ENCODE measurements at regions of chr20 and their contacts with region 1.

Region 1: DNA sequence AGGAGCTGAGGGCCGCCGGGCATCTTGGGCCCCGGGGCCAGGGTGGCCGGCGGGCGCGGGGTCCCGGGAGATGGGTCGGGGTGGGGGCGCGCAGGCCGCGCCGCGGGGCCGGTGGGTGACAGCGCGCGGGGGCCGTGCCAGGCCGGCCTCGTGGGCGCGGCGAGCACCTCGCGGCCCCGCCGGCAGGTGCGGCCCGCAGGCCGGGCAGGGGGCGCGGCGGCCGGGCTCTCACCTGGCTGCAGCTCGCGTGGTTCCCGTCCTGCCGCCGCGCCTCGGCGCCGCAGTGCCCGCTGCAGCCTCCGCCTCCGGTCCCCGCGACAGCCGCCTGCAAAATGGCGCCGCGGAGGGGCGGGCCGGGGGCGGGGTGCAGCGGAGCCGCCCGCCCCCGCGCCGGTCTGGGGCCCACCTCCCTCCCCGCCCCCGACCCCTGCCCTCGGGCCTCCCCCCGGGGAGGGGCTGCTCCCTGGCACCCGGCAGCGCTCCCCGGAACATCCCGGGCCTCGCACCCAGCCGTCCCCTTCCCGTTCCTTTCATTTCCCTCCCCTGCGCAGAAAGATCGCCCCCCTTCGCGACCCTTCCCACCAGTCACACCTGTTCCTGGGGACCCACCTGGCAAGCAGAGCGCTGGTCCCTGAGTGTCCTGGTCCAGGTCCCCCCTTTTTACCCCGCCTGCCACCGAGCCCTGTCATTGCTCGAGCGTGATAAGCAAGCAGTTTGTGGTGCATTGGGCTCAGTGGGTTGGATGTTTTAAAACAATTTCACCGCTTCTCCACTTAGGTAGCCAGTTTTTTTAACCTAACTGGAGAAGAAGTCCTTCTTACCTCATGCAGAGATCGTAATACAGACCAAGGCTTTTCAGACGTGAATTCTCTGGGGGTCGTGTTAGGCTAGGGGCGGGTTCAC is at the start of gene SLC23A2:
- DNase-seq: peak; percentile 64
- ATAC-seq: peak; percentile 81
- H3K4me3 Mint-ChIP-seq: peak within 1 kb of the TSS; percentile 98
- H3K27ac Mint-ChIP-seq: peak within 1 kb of the TSS; percentile 92
- H3K4me1 Mint-ChIP-seq: peaks cover 43% of the 10 kb centered on the region
- H3K27me3 Mint-ChIP-seq: no peaks in the 10 kb centered on the region
- CTCF ChIP-seq: no peak
- total RNA-seq, gene SLC23A2: 70.9 and 79.8 TPM in 2 replicates

Region 2: DNA sequence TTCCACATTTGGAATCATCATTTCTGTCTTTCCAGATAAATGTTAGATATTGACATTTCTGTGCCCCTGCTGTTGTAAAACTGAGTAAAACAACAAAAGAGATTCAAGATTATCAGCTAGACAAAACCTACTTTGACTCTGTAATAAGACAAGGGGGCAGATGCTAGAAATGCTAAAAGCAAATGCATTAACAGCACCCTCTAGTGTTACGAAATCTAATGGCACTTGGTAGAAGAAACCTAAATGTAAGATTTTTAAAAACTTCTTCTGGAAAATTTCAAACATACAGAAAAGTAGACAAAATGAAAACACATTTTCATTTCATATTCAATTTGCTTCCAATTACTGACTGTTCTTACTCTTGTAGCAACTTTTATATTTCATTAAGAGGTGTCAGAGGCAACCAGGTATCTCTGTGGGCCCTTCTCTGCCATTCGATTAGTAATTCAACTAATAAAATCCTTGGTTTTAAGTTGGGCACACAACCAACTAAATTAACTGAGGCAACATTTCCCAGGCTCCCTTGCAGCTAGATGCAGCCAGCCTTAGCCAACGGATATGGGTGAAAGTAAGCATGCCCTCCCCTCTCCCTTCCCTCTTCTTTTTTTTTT is 45.1 kb before region 1 on chr20:
- CTCF ChIA-PET with region 1: interaction called, 5 read pairs
- POLR2A ChIA-PET with region 1: interaction called, 3 read pairs
- intact Hi-C with region 1: loop called (anchors 2 kb)
- DNase-seq: no peak
- ATAC-seq: no peak
- H3K4me3 Mint-ChIP-seq: no peak overlapping the region
- H3K27ac Mint-ChIP-seq: peak overlapping the region; percentile 18
- H3K4me1 Mint-ChIP-seq: peaks cover 34% of the 10 kb centered on the region
- H3K27me3 Mint-ChIP-seq: no peaks in the 10 kb centered on the region
- CTCF ChIP-seq: peak; percentile 19

Region 3: DNA sequence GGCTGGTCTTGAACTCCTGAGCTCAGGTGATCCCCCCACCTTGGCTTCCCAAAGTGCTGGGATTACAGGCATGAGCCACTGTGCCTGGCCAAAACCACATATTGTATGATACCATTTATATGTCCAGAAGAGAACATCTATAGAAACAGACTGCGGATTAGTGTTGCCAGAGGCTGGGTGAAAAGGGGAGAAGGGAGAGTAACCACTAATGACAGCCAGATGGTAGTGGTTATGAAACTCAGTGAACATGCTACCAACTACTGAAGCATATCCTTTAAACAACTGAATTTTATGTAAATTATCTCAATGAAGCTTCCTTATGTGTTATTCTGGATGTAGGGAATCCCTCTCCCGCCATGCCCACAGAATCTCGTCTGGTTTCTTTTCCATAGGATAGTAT is 15.8 kb before region 1 on chr20:
- CTCF ChIA-PET with region 1: interaction called, 3 read pairs
- POLR2A ChIA-PET with region 1: interaction called, 30 read pairs
- intact Hi-C with region 1: loop called (anchors 1 kb)
- DNase-seq: no peak
- ATAC-seq: peak; percentile 59
- H3K4me3 Mint-ChIP-seq: peak overlapping the region; percentile 66
- H3K27ac Mint-ChIP-seq: peak overlapping the region; percentile 92
- H3K4me1 Mint-ChIP-seq: peaks cover 92% of the 10 kb centered on the region
- H3K27me3 Mint-ChIP-seq: no peaks in the 10 kb centered on the region
- CTCF ChIP-seq: no peak

Region 4: GRCh38 chr20:5046656-5047339 is 45.4 kb after region 1 on chr20:
- CTCF ChIA-PET with region 1: no interaction called
- POLR2A ChIA-PET with region 1: no interaction called
- intact Hi-C with region 1: loop called (anchors 2 kb)
- DNase-seq: no peak
- ATAC-seq: peak; percentile 95
- H3K4me3 Mint-ChIP-seq: peak overlapping the region; percentile 3
- H3K27ac Mint-ChIP-seq: peak overlapping the region; percentile 53
- H3K4me1 Mint-ChIP-seq: peaks cover 30% of the 10 kb centered on the region
- H3K27me3 Mint-ChIP-seq: no peaks in the 10 kb centered on the region
- CTCF ChIP-seq: no peak

Region 5: GRCh38 chr20:5126512-5127203 is 125.2 kb after region 1 on chr20 and contains the start of gene CDS2:
- CTCF ChIA-PET with region 1: no interaction called
- POLR2A ChIA-PET with region 1: interaction called, 8 read pairs
- intact Hi-C with region 1: loop called (anchors 1 kb)
- DNase-seq: peak; percentile 99
- ATAC-seq: peak; percentile 87
- H3K4me3 Mint-ChIP-seq: peak within 1 kb of the TSS; percentile 87
- H3K27ac Mint-ChIP-seq: peak within 1 kb of the TSS; percentile 90
- H3K4me1 Mint-ChIP-seq: peaks cover 33% of the 10 kb centered on the region
- H3K27me3 Mint-ChIP-seq: no peaks in the 10 kb centered on the region
- CTCF ChIP-seq: no peak
- total RNA-seq, gene CDS2: 32.4 and 37.4 TPM in 2 replicates

Measured in activated B cell treated with CpG ODN at 0.5 μM for 24 hours (primary cell).